Activated naive CD4-positive, alpha-beta T cell treated with anti-CD3 and anti-CD28 coated beads, Interleukin-2, amount 10 ng/mL, durations not matched to agents 7 days and 5 days (primary cell): ENCODE measurements at regions of chr2 and their contacts with region 1.

Region 1: DNA sequence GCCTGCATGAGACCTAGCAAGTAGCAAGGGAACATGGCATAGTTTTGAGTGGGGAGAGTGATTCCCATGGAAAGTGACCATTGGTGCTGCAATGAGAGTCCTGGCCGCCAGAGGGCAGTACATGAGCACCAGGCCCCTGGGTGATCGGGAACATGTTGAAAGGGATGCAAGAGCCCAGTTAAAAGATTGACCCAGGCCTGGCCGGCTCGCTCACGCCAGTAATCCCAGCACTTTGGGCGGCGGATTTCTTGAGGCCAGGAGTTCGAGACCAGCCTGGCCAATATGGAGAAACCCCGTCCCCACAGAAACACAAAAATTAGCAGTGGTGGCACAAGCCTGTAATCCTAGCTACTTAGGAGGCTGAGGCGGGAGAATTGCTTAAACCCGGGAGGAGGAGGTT is 22.2 kb downstream of the FAP start:
- DNase-seq: peak; percentile 69
- H3K4me3 Mint-ChIP-seq: no peak overlapping the region
- H3K27ac Mint-ChIP-seq: no peak overlapping the region
- H3K4me1 Mint-ChIP-seq: no peaks in the 10 kb centered on the region
- H3K27me3 Mint-ChIP-seq: peaks cover 20% of the 10 kb centered on the region

Region 2: DNA sequence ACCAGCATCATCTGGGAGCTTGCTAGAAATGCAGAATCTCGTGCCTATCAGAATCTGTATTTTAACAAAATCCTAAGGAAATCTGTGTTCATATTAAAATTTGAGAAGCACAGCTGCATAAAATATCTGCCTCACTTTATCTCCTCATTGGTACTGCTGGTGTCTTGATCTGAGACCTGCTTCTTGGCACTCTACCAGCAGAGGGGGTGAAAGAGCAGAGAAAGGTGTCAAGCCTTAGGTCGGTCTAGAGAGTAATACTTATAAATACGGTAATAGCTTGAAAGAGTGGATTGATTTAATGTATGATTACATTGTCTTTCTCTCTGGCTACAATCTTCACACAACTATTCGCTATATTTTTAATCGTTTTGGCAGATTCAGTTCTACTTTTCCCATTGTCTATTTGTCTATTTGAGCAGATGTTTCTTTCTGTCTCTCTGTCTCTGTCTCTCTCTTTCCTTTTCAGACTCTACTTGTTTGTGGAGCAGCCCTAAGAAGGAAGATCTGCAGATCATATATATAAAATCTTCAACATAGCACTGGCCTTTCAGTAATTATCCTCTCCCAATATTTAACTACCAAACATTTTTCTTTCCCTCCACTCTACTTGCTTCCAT is 67.3 kb before region 1 on chr2:
- CTCF ChIA-PET with region 1: interaction called, 16 read pairs
- DNase-seq: peak; percentile 73
- H3K4me3 Mint-ChIP-seq: no peak overlapping the region
- H3K27ac Mint-ChIP-seq: no peak overlapping the region
- H3K4me1 Mint-ChIP-seq: no peaks in the 10 kb centered on the region
- H3K27me3 Mint-ChIP-seq: peaks cover 12% of the 10 kb centered on the region

Region 3: DNA sequence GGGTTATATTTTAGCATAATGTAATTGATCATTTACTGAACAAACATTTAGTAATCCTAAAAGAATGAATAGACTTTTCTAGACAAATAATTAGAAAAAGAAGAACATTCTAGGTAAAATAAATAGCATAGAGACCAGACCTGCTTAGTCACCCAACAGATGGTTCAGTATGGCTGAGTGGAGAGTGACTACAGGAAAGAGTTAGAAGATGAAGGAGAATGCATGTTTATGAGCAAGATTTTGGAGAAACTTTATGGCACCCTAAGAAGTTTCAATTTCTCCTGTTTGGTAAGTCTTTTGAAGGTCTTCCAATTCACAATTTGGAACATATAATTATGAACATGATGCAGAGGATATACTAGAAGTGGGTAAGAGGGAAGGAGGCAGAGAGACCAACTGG is 10.7 kb before region 1 on chr2:
- CTCF ChIA-PET with region 1: interaction called, 12 read pairs
- DNase-seq: no peak
- H3K4me3 Mint-ChIP-seq: no peak overlapping the region
- H3K27ac Mint-ChIP-seq: no peak overlapping the region
- H3K4me1 Mint-ChIP-seq: no peaks in the 10 kb centered on the region
- H3K27me3 Mint-ChIP-seq: no peaks in the 10 kb centered on the region

Region 4: DNA sequence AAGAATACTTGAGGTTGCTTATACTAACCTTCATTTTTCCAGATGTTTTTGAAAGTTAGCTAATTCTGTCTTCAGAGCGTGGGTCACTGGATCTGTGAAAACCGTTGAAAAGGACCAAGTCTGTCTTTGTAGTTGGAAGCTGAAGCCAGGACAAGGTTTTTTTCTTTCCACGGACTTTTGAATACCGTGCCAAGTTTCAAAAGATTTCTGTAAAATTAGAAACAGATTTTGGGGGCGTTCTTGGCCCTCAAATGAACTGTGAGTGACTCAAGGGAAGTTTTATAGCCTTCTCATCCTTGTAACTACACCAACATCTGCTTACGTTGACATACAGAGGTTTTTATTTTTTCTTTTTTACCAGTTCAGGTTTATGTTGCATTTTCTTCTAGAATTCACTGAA is 22.2 kb after region 1 on chr2 and contains the start of gene FAP:
- CTCF ChIA-PET with region 1: interaction called, 21 read pairs
- DNase-seq: no peak
- H3K4me3 Mint-ChIP-seq: no peak within 1 kb of the TSS
- H3K27ac Mint-ChIP-seq: no peak within 1 kb of the TSS
- H3K4me1 Mint-ChIP-seq: no peaks in the 10 kb centered on the region
- H3K27me3 Mint-ChIP-seq: peaks cover 29% of the 10 kb centered on the region

Region 5: DNA sequence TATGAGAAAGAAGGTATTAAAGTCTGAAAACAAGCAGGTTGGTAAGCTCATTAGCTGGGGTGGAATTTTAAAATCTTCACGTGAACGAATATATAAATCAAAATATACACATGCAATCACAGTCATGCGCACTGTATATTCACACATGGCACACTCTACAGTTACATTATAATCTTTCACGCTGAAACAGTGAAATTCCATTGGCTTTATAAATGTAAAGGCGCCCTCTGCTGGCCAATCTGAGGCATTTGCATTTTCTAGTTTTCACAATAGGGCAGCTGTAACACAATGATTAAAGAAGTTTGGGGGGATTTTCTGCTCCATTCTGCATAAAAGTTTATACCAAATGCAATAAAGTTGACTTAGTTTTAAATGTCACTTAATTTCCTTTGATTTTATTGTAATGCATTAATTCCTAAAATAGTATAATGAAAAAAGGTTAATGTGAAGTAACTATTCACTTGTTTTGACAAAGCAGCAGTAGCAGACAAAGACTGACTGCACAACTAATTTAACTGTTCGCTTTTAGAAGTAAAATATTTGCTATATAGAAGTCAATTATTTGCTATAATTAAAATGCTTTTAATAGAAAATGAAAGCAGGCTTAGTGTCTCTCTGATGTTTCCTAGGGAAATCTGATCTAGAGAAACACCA is 80.2 kb after region 1 on chr2:
- CTCF ChIA-PET with region 1: interaction called, 196 read pairs
- DNase-seq: peak; percentile 62
- H3K4me3 Mint-ChIP-seq: no peak overlapping the region
- H3K27ac Mint-ChIP-seq: no peak overlapping the region
- H3K4me1 Mint-ChIP-seq: no peaks in the 10 kb centered on the region
- H3K27me3 Mint-ChIP-seq: no peaks in the 10 kb centered on the region

Region 6: GRCh38 chr2:162333968-162334367 is 112.9 kb after region 1 on chr2:
- CTCF ChIA-PET with region 1: interaction called, 23 read pairs
- DNase-seq: peak; percentile 38
- H3K4me3 Mint-ChIP-seq: no peak overlapping the region
- H3K27ac Mint-ChIP-seq: no peak overlapping the region
- H3K4me1 Mint-ChIP-seq: no peaks in the 10 kb centered on the region
- H3K27me3 Mint-ChIP-seq: peaks cover 3% of the 10 kb centered on the region